Activated B cell treated with CpG ODN at 0.5 μM for 24 hours (primary cell): ENCODE measurements at regions of chr1 and their contacts with region 1.

Region 1: GRCh38 chr1:110766025-110766647 is 91.4 kb upstream of the KCNA3 start:
- DNase-seq: no peak
- ATAC-seq: peak; percentile 62
- H3K4me3 Mint-ChIP-seq: no peak overlapping the region
- H3K27ac Mint-ChIP-seq: no peak overlapping the region
- H3K4me1 Mint-ChIP-seq: peaks cover 3% of the 10 kb centered on the region
- H3K27me3 Mint-ChIP-seq: peaks cover 10% of the 10 kb centered on the region
- CTCF ChIP-seq: no peak

Region 2: DNA sequence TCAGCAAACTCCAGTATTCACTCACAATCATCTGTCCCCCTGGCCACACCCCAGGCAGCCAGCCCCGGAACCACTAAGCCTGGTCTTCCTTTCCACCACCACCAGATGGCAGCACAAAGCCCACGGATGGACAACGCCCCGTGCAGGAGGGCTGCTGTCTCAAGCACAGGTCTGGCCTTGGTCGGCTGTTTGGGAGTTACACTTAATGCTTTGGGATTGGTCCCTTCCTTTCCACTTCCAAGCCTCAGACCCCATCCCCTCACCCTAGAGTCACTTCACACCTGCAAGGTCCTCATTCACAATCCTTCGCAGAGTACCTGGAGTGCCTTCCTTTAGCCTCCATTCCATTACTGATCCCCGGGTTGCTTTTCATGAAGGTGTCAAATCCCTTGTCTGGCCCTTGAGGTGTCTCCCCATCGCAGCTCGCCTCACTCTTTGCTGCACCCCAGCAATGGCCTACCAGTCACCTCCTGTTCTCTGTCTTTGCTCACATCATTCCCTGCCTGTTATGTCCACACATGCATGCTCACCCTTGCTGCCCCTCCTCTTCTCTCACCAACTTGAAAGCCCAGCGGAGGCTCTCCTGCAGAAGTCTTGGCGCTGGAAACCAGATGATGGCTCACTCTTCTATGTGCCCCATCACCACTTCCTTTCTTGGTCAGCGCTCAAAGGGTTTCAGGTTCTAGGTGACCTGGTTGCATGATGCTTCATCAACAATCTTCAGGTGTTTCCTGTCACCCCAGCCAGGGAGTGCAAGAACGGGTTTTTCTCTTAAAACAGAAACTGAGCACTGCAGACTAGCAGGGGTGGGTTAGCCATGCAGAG is 135.1 kb before region 1 on chr1:
- CTCF ChIA-PET with region 1: interaction called, 110 read pairs
- POLR2A ChIA-PET with region 1: interaction called, 6 read pairs
- intact Hi-C with region 1: loop called (anchors 1 kb)
- DNase-seq: peak; percentile 72
- ATAC-seq: peak; percentile 73
- H3K4me3 Mint-ChIP-seq: no peak overlapping the region
- H3K27ac Mint-ChIP-seq: no peak overlapping the region
- H3K4me1 Mint-ChIP-seq: peaks cover 46% of the 10 kb centered on the region
- H3K27me3 Mint-ChIP-seq: no peaks in the 10 kb centered on the region
- CTCF ChIP-seq: peak; percentile 82

Region 3: DNA sequence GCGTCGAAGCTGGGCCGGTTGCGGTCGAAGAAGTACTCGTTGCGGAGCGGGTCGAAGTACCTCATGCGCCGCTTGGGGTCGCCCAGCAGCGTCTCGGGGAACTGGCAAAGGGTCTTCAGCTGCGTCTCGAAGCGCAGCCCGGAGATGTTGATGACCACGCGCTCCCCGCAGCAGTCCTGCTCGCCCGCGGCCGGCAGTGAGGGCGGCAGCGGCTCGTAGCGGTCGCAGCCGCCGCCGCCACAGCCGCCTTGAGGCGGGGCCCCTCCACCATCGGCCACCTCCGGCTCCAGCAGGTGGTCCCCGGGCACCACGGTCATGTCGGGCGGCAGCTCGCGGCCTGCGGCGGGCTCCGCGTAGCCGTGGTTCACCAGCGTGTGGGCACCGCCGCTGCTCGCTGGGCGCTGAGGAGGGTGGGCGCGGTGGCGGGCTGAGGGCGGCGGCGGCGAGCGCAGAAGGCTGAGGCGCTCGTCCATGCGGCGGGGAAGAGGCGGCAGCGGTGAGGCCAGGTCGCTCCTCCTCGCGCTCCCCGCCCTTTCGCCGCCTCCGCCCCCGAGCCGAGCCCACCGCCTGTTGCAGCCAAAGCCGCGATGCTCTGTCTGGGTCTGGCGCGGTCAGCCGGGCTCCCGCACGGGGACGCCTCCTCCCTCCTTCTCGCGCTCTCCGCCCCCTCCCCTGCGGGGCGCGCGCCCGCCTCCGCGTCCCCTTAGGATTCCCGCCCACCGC is 91.6 kb before region 1 on chr1 and contains the start of gene KCNA3:
- CTCF ChIA-PET with region 1: interaction called, 15 read pairs
- POLR2A ChIA-PET with region 1: no interaction called
- intact Hi-C with region 1: loop called (anchors 1 kb)
- DNase-seq: peak; percentile 68
- ATAC-seq: peak; percentile 62
- H3K4me3 Mint-ChIP-seq: peak within 1 kb of the TSS; percentile 90
- H3K27ac Mint-ChIP-seq: peak within 1 kb of the TSS; percentile 80
- H3K4me1 Mint-ChIP-seq: peaks cover 60% of the 10 kb centered on the region
- H3K27me3 Mint-ChIP-seq: no peaks in the 10 kb centered on the region
- CTCF ChIP-seq: no peak
- total RNA-seq, gene KCNA3: 15.0 and 20.0 TPM in 2 replicates

Region 4: DNA sequence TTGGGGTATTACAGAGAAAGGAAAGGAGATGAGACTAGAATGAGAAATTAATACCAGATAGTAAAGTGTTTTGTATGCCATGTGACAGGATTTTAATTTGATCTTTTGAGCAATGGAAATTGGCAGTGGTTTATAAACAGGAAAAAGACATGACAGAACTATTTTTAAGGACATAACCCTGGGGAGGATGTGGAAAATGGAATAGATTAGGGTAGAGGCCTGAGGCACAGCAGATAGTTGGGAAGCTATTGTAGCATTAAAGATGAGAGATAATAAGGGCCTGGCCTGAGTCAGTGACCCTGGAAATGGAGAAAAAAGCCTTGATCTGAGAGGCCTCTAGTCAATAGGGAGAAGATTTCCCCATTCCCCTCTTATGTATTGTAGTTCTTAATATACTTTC is 69.3 kb before region 1 on chr1:
- CTCF ChIA-PET with region 1: no interaction called
- POLR2A ChIA-PET with region 1: no interaction called
- intact Hi-C with region 1: no loop called
- DNase-seq: no peak
- ATAC-seq: no peak
- H3K4me3 Mint-ChIP-seq: no peak overlapping the region
- H3K27ac Mint-ChIP-seq: no peak overlapping the region
- H3K4me1 Mint-ChIP-seq: peaks cover 6% of the 10 kb centered on the region
- H3K27me3 Mint-ChIP-seq: peaks cover under 1% of the 10 kb centered on the region
- CTCF ChIP-seq: no peak

Region 5: GRCh38 chr1:110708974-110709440 is 57.1 kb before region 1 on chr1:
- CTCF ChIA-PET with region 1: no interaction called
- POLR2A ChIA-PET with region 1: no interaction called
- intact Hi-C with region 1: no loop called
- DNase-seq: no peak
- ATAC-seq: no peak
- H3K4me3 Mint-ChIP-seq: no peak overlapping the region
- H3K27ac Mint-ChIP-seq: no peak overlapping the region
- H3K4me1 Mint-ChIP-seq: no peaks in the 10 kb centered on the region
- H3K27me3 Mint-ChIP-seq: peaks cover 4% of the 10 kb centered on the region
- CTCF ChIP-seq: no peak

Region 6: GRCh38 chr1:110811529-110811928 is 45.4 kb after region 1 on chr1:
- CTCF ChIA-PET with region 1: no interaction called
- POLR2A ChIA-PET with region 1: no interaction called
- intact Hi-C with region 1: no loop called
- DNase-seq: no peak
- ATAC-seq: no peak
- H3K4me3 Mint-ChIP-seq: no peak overlapping the region
- H3K27ac Mint-ChIP-seq: no peak overlapping the region
- H3K4me1 Mint-ChIP-seq: peaks cover 4% of the 10 kb centered on the region
- H3K27me3 Mint-ChIP-seq: no peaks in the 10 kb centered on the region
- CTCF ChIP-seq: no peak

Region 7: DNA sequence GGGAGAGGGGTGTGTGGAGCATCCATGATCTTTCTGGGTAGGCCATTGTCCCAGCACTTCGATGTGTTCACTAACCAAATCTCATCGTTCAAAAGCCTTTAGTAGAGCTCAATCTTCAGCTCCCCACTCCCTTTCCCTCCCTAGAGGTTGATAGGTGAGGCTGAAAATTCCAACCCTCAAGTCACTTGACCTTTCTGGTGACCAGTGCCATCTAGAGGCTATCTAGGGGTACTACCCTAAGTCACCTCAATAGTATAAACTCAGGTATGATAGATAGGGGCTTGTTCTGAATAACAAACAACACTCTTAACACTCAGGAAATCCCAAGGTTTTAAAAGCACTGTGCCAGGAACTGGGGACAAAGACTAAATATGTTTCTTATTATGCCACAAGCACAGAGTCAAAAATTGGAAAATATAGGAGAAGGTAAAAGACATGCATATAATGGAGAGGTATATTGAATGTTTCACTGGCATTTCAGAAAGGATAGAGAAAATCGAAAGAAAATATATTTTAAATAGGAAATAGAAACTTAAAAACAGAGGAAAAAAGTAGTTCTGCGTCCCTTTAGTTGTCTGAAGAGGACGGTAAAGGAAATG is 63.9 kb after region 1 on chr1:
- CTCF ChIA-PET with region 1: interaction called, 14 read pairs
- POLR2A ChIA-PET with region 1: no interaction called
- intact Hi-C with region 1: no loop called
- DNase-seq: no peak
- ATAC-seq: peak; percentile 92
- H3K4me3 Mint-ChIP-seq: no peak overlapping the region
- H3K27ac Mint-ChIP-seq: no peak overlapping the region
- H3K4me1 Mint-ChIP-seq: peaks cover 34% of the 10 kb centered on the region
- H3K27me3 Mint-ChIP-seq: no peaks in the 10 kb centered on the region
- CTCF ChIP-seq: peak; percentile 97